ENCODE measurements at regions of chr1 and their contacts with region 1.

Region 1: DNA sequence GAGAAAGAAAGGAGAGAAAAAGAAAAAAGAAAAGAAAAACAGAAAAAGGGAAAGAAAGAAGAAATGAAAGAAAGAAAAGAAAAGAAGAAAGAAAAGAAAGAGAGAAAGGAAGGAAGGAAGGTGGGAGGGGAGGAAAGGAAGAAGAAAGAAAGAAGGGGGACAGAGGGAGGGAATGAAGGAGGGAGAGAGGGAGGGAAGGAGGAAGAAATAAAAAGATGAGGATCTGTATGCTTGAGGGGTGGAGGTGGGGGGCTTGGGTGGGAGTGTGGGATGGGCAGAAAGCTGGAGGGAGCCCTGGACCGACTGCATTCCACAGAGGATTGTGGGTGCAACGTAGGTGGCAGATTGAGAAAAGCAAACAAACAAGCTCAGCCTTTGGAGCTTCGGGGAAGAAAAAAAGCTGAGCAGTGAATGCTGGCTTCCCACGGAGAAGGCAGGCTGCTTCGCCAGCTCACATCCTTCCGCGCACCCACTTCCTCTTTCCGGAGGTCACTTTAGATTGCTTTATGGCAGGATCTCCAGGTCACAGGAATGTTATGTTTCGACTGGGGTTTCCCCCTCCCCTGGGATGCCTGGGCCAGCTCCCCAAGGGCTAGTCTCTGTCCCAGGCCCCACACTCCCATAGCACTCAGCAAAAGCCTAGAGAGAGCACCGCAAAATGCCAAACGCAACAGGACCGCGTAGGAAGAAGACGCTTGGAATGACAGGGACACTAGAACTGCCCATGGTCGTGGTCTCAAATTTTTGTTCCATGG is 20.7 kb upstream of the LGALS8 start:
- DNase-seq: peak in 4 of 14 experiments; percentile 24 to 54 (median 38)
- ATAC-seq: no peak
- H3K4me3 ChIP-seq: no peak overlapping the region
- H3K4me3 Mint-ChIP-seq: peak overlapping the region; percentile 61
- H3K27ac ChIP-seq: no peak overlapping the region
- H3K27ac Mint-ChIP-seq: peak overlapping the region; percentile 20
- H3K4me1 ChIP-seq: peaks cover 9% of the 10 kb centered on the region
- H3K4me1 Mint-ChIP-seq: peaks cover 13% of the 10 kb centered on the region
- H3K27me3 ChIP-seq: no peaks in the 10 kb centered on the region
- H3K27me3 Mint-ChIP-seq: no peaks in the 10 kb centered on the region
- CTCF ChIP-seq: no peak

Region 2: DNA sequence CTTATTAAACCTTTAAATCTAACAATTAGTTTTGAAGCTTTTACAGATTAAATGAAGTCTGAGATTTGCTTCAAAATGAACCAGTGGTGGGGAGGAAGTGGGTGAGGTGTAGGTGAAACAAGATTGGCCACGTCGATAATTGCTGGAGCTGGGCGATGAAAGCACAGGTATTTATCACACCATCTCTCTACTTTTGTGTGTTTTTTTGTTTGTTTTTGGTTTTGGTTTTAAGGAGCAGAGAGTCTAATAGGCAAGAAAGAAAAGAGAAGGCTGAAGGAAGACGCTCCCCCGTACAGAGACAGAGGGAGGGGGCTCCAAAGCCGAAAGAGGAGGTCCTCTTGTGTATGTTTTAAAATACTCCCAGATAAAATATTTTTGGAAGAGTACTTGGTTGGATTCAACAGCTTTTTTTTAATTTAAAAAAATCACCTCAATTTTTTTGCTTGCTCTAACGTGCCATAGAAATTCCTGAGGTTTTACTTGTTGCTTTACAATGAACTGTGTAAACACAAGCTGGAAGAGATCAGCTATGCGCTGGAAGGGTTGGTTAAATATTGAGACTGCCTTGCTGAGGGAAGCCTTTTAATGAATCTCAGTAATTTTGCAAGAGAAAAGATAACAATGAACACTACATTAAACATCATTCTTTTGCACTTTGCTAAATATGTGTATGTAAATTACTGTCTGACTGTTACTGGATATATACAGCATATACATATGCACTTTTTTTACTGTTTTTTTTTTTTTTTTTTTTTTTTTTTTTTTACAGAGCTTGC is 14.1 kb after region 1 on chr1:
- CTCF ChIA-PET with region 1: no interaction called
- POLR2A ChIA-PET with region 1: interaction called, 10 read pairs
- intact Hi-C with region 1: no loop called
- DNase-seq: peak in 9 of 14 experiments; percentile 18 to 84 (median 34)
- ATAC-seq: peak; percentile 90
- H3K4me3 ChIP-seq: peak overlapping the region; percentile 42
- H3K4me3 Mint-ChIP-seq: peak overlapping the region; percentile 80
- H3K27ac ChIP-seq: peak overlapping the region in 1 of 2 donors; percentile 80
- H3K27ac Mint-ChIP-seq: peak overlapping the region; percentile 81
- H3K4me1 ChIP-seq: peaks cover 29% of the 10 kb centered on the region
- H3K4me1 Mint-ChIP-seq: peaks cover 37% of the 10 kb centered on the region
- H3K27me3 ChIP-seq: no peaks in the 10 kb centered on the region
- H3K27me3 Mint-ChIP-seq: no peaks in the 10 kb centered on the region
- CTCF ChIP-seq: no peak

Measured in CD4-positive, alpha-beta T cell (primary cell).